ENCODE measurements at regions of chr1 and their contacts with region 1.

Region 1: GRCh38 chr1:22164841-22165808 is 22.2 kb upstream of the WNT4 start:
- DNase-seq: no peak
- H3K4me3 Mint-ChIP-seq: no peak overlapping the region
- H3K27ac Mint-ChIP-seq: no peak overlapping the region
- H3K4me1 Mint-ChIP-seq: no peaks in the 10 kb centered on the region
- H3K27me3 Mint-ChIP-seq: peaks cover 2% of the 10 kb centered on the region

Region 2: DNA sequence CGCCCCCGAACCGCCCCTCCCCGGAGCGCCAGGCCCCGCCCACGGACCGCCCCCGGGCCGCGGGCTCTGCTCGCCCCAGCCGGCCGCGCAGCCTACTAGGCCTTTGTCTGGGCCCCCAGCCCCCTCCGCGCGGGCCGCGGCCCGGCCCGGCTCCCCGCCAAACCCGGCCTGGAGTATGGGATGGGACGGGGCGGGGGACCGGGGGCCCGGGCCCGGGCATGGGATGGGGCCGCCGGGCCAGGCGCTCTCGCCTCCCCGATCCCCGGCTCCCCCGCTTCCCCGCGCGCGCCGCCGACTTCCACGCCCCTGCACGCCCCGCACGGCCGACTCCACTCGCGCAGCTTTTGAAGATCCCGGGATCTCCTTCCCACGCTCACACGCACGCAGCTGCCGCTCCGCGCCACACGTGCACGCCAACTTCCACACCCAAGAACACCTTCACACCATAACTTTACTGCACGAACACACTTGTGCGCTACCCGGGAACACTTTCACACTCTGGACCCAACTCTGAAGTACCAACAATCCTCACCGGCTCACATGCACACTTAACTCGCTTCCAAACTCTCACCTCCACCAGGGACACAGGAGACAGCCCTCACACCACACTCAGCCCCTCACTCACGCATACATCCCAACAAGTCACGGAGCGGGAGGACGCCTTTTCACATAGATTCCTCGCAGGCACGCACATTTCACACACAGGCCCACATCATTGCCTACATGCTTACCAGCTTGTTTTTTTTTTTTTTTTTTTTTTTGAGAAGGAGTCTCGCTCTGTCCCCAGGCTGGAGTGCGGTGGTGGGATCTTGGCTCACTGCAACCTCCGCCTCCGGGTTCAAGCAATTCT is 227.5 kb before region 1 on chr1:
- CTCF ChIA-PET with region 1: no interaction called
- intact Hi-C with region 1: no loop called
- DNase-seq: peak; percentile 62
- H3K4me3 Mint-ChIP-seq: peak overlapping the region; percentile 75
- H3K27ac Mint-ChIP-seq: no peak overlapping the region
- H3K4me1 Mint-ChIP-seq: peaks cover 22% of the 10 kb centered on the region
- H3K27me3 Mint-ChIP-seq: peaks cover 3% of the 10 kb centered on the region

Region 3: GRCh38 chr1:22176258-22176657 is 11.1 kb after region 1 on chr1:
- CTCF ChIA-PET with region 1: no interaction called
- intact Hi-C with region 1: loop called (anchors 1 kb)
- DNase-seq: peak; percentile 84
- H3K4me3 Mint-ChIP-seq: no peak overlapping the region
- H3K27ac Mint-ChIP-seq: no peak overlapping the region
- H3K4me1 Mint-ChIP-seq: peaks cover 28% of the 10 kb centered on the region
- H3K27me3 Mint-ChIP-seq: no peaks in the 10 kb centered on the region